GM18951 (cell line): ENCODE measurements at regions of chr1 and their contacts with region 1.

Region 1: DNA sequence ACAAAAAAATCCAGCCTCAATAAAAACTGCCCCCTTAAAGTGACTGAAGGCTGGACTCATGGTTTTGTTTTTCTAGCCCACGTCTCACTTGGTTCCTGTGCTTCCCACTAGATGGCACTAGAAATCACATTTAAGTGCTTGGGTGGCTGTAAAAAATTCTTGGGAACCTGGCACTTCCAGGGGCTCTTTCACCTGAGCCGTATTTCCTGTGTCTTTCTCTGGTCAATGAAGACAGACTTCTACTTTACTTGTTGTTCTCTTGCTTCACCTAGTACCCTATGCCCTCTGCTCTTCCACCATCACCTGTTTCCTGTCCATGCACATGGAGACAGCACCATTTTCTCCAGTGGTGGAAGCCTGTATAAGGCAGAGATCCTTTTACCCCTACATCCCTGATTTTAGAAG is 20.0 kb downstream of the METTL13 start:
- POLR2A ChIP-seq: no peak

Region 2: DNA sequence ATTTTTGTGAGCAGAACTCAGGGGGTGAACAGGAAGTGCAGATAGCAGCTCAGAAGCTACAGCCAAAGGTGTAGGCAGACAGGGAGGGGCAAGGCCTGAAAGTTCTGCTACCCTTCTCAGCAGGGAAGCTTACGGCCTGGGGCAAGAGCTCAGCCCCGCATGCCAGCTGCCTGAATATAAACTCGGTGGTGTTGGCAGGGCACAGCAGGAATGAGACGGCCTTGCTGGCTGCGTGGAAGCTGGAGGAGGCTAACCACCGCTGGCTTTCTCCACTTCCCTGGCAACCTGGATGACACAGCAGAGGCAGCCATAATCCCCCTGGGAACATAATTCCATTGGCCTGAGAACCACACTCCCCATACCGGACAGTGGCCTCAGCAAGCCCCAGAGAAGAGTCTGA is 398.1 kb before region 1 on chr1:
- in situ Hi-C with region 1: no loop called
- POLR2A ChIP-seq: no peak

Region 3: GRCh38 chr1:171446386-171446785 is 355.1 kb before region 1 on chr1:
- in situ Hi-C with region 1: no loop called
- POLR2A ChIP-seq: no peak

Region 4: GRCh38 chr1:171715813-171716251 is 85.7 kb before region 1 on chr1:
- in situ Hi-C with region 1: no loop called
- POLR2A ChIP-seq: no peak

Region 5: DNA sequence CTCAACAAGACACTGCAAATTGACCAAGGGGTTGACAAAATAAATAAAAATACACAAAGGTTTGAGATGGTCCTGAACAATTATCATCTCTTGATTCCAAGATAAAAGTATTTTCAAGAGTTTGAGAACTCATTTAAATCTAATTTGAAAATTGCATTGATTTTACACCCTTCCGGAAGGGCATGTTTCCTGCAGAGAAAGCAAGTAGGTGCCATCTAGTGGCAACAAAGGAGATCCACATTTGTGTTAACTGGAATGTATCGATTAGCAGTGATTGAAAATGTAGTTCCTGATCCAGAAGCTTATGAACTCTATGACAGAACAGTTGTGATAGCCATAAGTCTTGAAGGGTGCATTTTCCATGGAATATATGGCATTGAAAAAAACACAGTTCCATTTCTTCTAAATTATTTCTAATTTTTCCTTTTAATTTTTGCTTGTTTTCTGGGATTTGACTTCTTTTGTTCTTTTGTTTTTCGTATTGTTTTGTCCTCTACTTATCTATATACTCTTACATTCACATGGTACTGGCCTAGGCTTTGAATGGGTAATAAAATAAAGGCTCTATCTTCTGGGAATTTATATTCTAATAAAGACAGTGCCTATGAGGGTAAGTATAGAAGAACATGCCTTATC is 183.5 kb after region 1 on chr1:
- in situ Hi-C with region 1: loop called (anchors 10 kb)
- POLR2A ChIP-seq: no peak

Region 6: GRCh38 chr1:172401892-172402291 is 600.4 kb after region 1 on chr1:
- in situ Hi-C with region 1: loop called (anchors 25 kb)
- POLR2A ChIP-seq: no peak